Naive thymus-derived CD4-positive, alpha-beta T cell (primary cell): ENCODE measurements at regions of chr17 and their contacts with region 1.

Region 1: GRCh38 chr17:7435221-7435675 is at the start of gene TMEM102:
- DNase-seq: peak; percentile 92 to 99 (median 99)
- ATAC-seq: peak; percentile 94
- H3K4me3 ChIP-seq: peak within 1 kb of the TSS; percentile 65
- H3K4me3 Mint-ChIP-seq: peak within 1 kb of the TSS; percentile 86 to 96 (median 94)
- H3K27ac ChIP-seq: peak within 1 kb of the TSS; percentile 83
- H3K27ac Mint-ChIP-seq: peak within 1 kb of the TSS; percentile 89 to 97 (median 95)
- H3K4me1 ChIP-seq: peaks cover 16 to 38% of the 10 kb centered on the region in 2 donors
- H3K4me1 Mint-ChIP-seq: peaks cover 26 to 42% (median 36%) of the 10 kb centered on the region in 7 donors
- H3K27me3 ChIP-seq: peaks cover 0 to 9% of the 10 kb centered on the region in 2 donors
- H3K27me3 Mint-ChIP-seq: peaks cover 11 to 13% (median 12%) of the 10 kb centered on the region in 5 donors
- total RNA-seq, gene TMEM102: 8.2 to 19.1 (median 16.5) TPM

Region 2: DNA sequence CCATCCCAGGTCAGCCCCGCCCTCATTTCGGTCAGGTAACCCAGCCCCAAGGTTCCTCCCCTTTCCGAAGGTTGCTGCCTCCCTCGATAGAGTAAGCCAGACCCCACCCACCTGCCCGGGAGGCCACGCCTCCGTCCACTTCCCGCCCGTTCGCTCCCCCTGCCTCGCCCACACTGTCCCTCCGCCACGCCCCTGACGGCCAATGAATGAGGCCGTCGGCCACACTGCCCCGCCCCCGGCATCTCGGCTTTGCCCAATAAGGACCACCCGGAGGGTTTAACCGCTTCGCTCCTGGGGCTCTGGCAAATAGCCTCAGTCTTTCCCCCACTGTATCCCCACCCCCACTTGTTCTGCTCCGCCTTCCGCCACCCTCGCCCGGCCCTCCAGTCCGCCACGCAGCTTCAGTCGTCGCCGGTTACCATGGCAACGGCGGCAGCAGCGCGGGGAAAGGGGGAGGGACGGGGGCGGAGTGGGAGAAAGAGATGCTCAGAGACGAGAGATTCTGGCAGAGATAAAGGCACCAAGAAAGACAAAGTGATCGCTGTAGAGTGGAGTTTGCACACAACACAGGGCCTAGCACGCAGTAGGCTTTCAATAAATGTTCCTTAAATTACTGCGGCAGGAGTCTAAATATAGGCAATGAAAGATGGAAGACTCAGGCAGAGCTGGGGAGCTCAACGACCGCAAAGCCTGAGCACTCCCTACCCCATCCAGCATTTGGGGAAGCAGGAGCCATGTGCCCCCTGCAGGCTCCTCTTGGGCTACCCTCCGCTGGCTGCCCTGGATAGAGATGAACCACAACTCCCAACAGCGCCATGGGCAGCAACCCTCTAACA is 220.7 kb before region 1 on chr17:
- CTCF ChIA-PET with region 1: no interaction called
- POLR2A ChIA-PET with region 1: no interaction called
- intact Hi-C with region 1: loop called in 1 of 2 experiments (anchors 1 kb)
- DNase-seq: peak; percentile 96 to 99 (median 97)
- ATAC-seq: peak; percentile 90
- H3K4me3 ChIP-seq: peak overlapping the region; percentile 61
- H3K4me3 Mint-ChIP-seq: peak overlapping the region; percentile 76 to 97 (median 94)
- H3K27ac ChIP-seq: peak overlapping the region; percentile 97
- H3K27ac Mint-ChIP-seq: peak overlapping the region; percentile 90 to 100 (median 99)
- H3K4me1 ChIP-seq: peaks cover 25 to 49% of the 10 kb centered on the region in 2 donors
- H3K4me1 Mint-ChIP-seq: peaks cover 36 to 69% (median 65%) of the 10 kb centered on the region in 7 donors
- H3K27me3 ChIP-seq: no peaks in the 10 kb centered on the region
- H3K27me3 Mint-ChIP-seq: peaks cover 0 to 16% (median 0%) of the 10 kb centered on the region in 5 donors

Region 3: DNA sequence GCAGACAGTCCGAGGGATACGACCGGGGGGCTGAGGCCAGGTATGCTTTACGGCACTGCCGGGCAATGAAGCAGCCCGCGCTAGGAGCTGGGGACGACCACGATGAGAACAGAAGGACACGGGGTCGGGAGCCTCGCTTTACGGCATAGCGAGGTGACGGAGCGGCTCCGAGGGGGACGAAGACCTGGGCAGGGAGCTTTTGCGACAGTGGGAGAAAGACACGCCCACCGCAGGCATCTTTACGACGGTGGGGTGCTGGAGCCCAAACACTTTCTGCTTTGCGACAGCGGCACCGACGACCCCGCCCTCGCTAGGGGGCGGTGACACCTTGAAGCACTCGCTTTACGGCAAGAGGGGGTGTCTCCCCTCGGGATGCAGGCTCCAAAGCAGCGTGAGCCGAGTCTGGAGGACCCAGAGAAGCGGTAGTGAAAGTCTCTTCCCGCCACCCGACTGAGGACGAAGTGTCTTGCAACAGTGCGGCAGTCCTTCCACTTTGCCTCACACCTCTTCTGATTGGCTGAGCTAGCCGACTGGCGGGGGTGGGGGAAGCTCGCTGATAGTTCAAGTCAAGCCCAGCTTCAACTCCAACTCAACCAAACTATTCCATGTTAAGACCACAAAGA is 105.8 kb before region 1 on chr17:
- CTCF ChIA-PET with region 1: interaction called, 11 read pairs
- POLR2A ChIA-PET with region 1: interaction called, 6 read pairs
- intact Hi-C with region 1: loop called (anchors 1 kb)
- DNase-seq: peak; percentile 84 to 98 (median 98)
- ATAC-seq: peak; percentile 91
- H3K4me3 ChIP-seq: peak overlapping the region; percentile 95
- H3K4me3 Mint-ChIP-seq: peak overlapping the region; percentile 89 to 100 (median 96)
- H3K27ac ChIP-seq: peak overlapping the region; percentile 88
- H3K27ac Mint-ChIP-seq: peak overlapping the region; percentile 93 to 99 (median 97)
- H3K4me1 ChIP-seq: peaks cover 15 to 36% of the 10 kb centered on the region in 2 donors
- H3K4me1 Mint-ChIP-seq: peaks cover 29 to 61% (median 44%) of the 10 kb centered on the region in 7 donors
- H3K27me3 ChIP-seq: no peaks in the 10 kb centered on the region
- H3K27me3 Mint-ChIP-seq: no peaks in the 10 kb centered on the region

Region 4: GRCh38 chr17:7403977-7404736 is 31.1 kb before region 1 on chr17 and contains the start of gene TMEM256:
- CTCF ChIA-PET with region 1: interaction called, 3 read pairs
- POLR2A ChIA-PET with region 1: interaction called, 30 read pairs
- intact Hi-C with region 1: loop called (anchors 1 kb)
- DNase-seq: peak; percentile 79 to 96 (median 91)
- ATAC-seq: peak; percentile 93
- H3K4me3 ChIP-seq: peak within 1 kb of the TSS; percentile 95
- H3K4me3 Mint-ChIP-seq: peak within 1 kb of the TSS; percentile 87 to 98 (median 96)
- H3K27ac ChIP-seq: peak within 1 kb of the TSS; percentile 78
- H3K27ac Mint-ChIP-seq: peak within 1 kb of the TSS; percentile 91 to 100 (median 96)
- H3K4me1 ChIP-seq: peaks cover 9 to 10% of the 10 kb centered on the region in 2 donors
- H3K4me1 Mint-ChIP-seq: peaks cover 8 to 25% (median 21%) of the 10 kb centered on the region in 7 donors
- H3K27me3 ChIP-seq: no peaks in the 10 kb centered on the region
- H3K27me3 Mint-ChIP-seq: peaks cover 0 to 23% (median 0%) of the 10 kb centered on the region in 5 donors
- total RNA-seq, gene TMEM256: 31.5 to 58.5 (median 48.2) TPM

Region 5: GRCh38 chr17:7515911-7516610 is 80.8 kb after region 1 on chr17:
- CTCF ChIA-PET with region 1: interaction called, 12 read pairs
- POLR2A ChIA-PET with region 1: interaction called, 8 read pairs
- intact Hi-C with region 1: no loop called
- DNase-seq: no peak
- ATAC-seq: no peak
- H3K4me3 ChIP-seq: no peak overlapping the region
- H3K4me3 Mint-ChIP-seq: no peak overlapping the region
- H3K27ac ChIP-seq: no peak overlapping the region
- H3K27ac Mint-ChIP-seq: peak overlapping the region in 3 of 9 donors; percentile 12 to 74 (median 45)
- H3K4me1 ChIP-seq: no peaks in the 10 kb centered on the region
- H3K4me1 Mint-ChIP-seq: peaks cover 0 to 7% (median 0%) of the 10 kb centered on the region in 7 donors
- H3K27me3 ChIP-seq: no peaks in the 10 kb centered on the region
- H3K27me3 Mint-ChIP-seq: no peaks in the 10 kb centered on the region

Region 6: DNA sequence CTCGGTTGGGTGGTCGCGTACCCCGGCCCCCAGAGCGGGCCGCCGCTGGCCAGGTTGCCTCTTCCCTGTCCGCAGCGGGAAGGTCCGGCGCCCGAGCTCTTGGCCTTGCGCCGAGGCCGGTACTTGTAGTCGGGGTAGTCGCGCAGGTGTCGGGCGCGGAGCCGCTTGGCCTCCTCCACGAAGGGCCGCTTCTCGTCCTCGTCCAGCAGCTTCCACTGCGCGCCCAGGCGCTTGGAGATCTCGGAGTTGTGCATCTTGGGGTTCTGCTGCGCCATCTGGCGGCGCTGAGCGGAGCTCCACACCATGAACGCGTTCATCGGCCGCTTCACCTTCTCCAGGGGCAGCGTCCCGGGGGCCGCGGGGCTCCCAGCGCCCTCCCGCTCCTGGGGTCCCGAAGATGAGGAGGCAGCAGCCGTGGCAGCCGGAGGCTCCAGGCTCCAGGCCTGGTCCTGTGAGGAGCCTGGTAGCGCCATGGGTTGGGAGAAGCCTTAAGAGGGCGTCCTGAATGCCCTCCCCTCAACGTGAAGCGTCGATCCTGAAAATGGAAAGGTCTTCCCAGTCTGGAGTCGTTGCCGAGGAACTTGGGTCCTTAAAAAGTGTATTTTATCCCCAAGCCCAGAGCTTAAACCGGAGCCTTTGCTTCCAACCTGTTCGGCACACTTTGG is 154.1 kb after region 1 on chr17:
- CTCF ChIA-PET with region 1: interaction called, 9 read pairs
- POLR2A ChIA-PET with region 1: interaction called, 15 read pairs
- intact Hi-C with region 1: loop called in 1 of 2 experiments (anchors 1 kb)
- DNase-seq: peak; percentile 54 to 72 (median 63)
- ATAC-seq: peak; percentile 87
- H3K4me3 ChIP-seq: no peak overlapping the region
- H3K4me3 Mint-ChIP-seq: no peak overlapping the region
- H3K27ac ChIP-seq: no peak overlapping the region
- H3K27ac Mint-ChIP-seq: peak overlapping the region in 2 of 9 donors; percentile 13 to 38
- H3K4me1 ChIP-seq: peaks cover 8 to 11% of the 10 kb centered on the region in 2 donors
- H3K4me1 Mint-ChIP-seq: peaks cover 9 to 14% (median 13%) of the 10 kb centered on the region in 7 donors
- H3K27me3 ChIP-seq: no peaks in the 10 kb centered on the region
- H3K27me3 Mint-ChIP-seq: no peaks in the 10 kb centered on the region